ENCODE measurements at regions of chr22 and their contacts with region 1.

Region 1: GRCh38 chr22:17501679-17502285 is 61.5 kb upstream of the SLC25A18 start:
- DNase-seq: peak; percentile 70 to 87 (median 80)
- H3K4me3 ChIP-seq: no peak overlapping the region
- H3K27ac ChIP-seq: no peak overlapping the region
- H3K4me1 ChIP-seq: no peaks in the 10 kb centered on the region
- H3K27me3 ChIP-seq: no peaks in the 10 kb centered on the region

Region 2: DNA sequence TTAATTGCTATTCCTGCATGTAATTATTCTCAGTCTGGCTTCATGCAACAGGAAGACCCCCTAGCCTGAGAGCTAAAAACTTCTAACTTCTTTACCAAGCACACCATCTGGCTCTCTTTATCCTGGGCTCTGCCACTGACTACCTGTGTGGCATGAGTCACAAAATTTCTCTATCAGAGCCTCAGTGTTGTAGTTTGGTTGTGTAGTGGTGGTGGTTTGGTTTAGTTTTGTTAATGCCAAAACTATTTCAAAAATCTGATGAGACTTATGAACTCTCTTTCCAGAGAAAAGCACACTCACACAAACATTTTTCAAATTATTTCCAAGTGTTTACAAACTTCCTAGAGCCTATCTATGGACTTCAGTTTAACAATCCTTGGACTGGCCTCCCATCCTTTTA is 424.5 kb before region 1 on chr22:
- CTCF ChIA-PET with region 1: interaction called, 62 read pairs
- POLR2A ChIA-PET with region 1: no interaction called
- DNase-seq: no peak
- H3K4me3 ChIP-seq: no peak overlapping the region
- H3K27ac ChIP-seq: no peak overlapping the region
- H3K4me1 ChIP-seq: peaks cover 3 to 17% (median 14%) of the 10 kb centered on the region in 4 experiments
- H3K27me3 ChIP-seq: peaks cover 0 to 2% (median 0%) of the 10 kb centered on the region in 5 experiments

Region 3: GRCh38 chr22:17171313-17172171 is 330.2 kb before region 1 on chr22:
- CTCF ChIA-PET with region 1: interaction called, 37 read pairs
- POLR2A ChIA-PET with region 1: no interaction called
- DNase-seq: peak; percentile 73 to 87 (median 80)
- H3K4me3 ChIP-seq: peak overlapping the region; percentile 43 to 86 (median 69)
- H3K27ac ChIP-seq: peak overlapping the region in 1 of 2 experiments; percentile 66
- H3K4me1 ChIP-seq: peaks cover 0 to 16% (median 7%) of the 10 kb centered on the region in 4 experiments
- H3K27me3 ChIP-seq: peaks cover 0 to 2% (median 0%) of the 10 kb centered on the region in 5 experiments

Region 4: DNA sequence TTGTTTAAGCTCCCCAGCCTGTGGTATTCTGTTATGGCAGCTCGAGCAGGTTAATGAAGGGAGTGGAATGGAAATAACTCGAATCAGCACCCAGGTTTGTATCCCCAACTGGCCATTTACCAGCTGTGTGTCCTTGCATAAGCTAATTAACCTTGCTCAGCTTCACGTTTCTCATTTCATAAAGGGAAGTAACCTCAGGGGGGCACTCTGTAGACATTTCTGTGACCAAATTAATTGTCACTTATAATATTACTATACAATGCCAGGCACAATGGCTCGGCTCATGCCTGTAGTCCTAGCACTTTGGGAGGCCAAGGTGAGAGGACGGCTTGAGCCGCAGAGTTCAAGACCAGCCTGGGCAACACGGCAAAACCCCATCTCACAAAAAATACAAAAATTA is 296.4 kb before region 1 on chr22:
- CTCF ChIA-PET with region 1: interaction called, 10 read pairs
- POLR2A ChIA-PET with region 1: no interaction called
- DNase-seq: peak in 2 of 3 donors; percentile 12 to 27
- H3K4me3 ChIP-seq: no peak overlapping the region
- H3K27ac ChIP-seq: no peak overlapping the region
- H3K4me1 ChIP-seq: no peaks in the 10 kb centered on the region
- H3K27me3 ChIP-seq: no peaks in the 10 kb centered on the region

Measured in common myeloid progenitor, CD34-positive (primary cell).